ENCODE measurements at regions of chr5 and their contacts with region 1.

Region 1: DNA sequence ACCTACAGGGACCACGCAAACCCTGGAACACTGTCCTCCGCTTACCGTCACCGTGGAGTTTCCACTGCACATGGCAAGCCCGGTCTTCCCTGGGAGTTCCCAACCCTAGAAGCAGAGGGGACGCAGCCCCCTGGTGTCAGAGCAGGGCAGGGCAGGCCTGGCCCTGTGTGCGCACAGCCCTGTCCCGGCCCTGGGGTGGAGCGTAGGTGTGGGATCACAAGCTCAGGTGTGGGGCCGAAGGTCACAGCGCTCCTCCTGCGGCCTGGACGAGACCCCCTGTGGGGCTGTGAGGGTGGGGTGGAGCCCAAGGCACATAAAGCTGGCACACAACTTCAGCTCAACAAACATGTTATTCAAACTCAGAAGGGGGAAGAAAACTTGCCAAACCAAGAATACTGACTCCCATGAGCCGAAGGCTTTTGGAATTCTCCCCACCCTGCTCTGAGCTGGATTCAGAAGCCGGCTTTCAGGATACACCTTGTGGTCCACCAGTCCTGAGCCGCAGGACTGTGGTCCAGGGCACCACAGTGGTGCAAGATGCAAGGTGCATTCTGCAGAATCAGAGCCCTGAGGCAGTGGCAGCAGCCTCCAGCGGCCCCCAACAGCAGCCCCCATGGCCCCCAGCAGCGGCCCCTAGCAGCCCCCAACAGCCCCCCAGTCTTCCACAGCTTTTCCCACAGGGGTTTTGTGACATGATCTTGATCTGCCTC is 11.8 kb upstream of the EXOC3 start:
- DNase-seq: no peak
- ATAC-seq: peak; percentile 92
- H3K4me3 ChIP-seq: no peak overlapping the region
- H3K27ac ChIP-seq: no peak overlapping the region
- H3K4me1 ChIP-seq: no peaks in the 10 kb centered on the region
- H3K27me3 ChIP-seq: no peaks in the 10 kb centered on the region
- CTCF ChIP-seq: peak; percentile 85

Region 2: GRCh38 chr5:317086-317811 is 113.9 kb before region 1 on chr5:
- CTCF ChIA-PET with region 1: interaction called, 12 read pairs
- POLR2A ChIA-PET with region 1: no interaction called
- in situ Hi-C with region 1: no loop called
- intact Hi-C with region 1: loop called (anchors 5 kb)
- DNase-seq: peak; percentile 42
- ATAC-seq: peak; percentile 82
- H3K4me3 ChIP-seq: no peak overlapping the region
- H3K27ac ChIP-seq: peak overlapping the region; percentile 86
- H3K4me1 ChIP-seq: peaks cover 53% of the 10 kb centered on the region
- H3K27me3 ChIP-seq: no peaks in the 10 kb centered on the region
- CTCF ChIP-seq: peak; percentile 97

Region 3: DNA sequence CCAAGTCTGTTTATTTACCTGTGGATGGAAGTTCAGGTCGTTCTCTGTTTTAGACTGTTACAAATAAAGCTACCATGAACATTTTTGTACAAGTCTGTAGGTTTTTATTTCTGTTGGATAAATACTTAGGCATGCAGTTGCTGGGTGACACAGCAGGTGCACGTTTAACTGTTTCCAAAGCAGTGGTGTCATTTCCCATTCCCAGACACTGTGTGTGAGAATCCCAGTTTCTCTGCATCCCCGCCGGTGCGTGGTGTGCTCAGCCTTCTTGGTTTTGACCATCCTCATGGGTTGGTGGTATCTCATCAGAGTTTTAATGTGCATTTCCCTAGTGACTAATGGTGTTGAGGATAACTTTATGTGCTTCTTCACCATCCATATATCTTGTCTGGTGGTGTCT is 82.4 kb before region 1 on chr5:
- CTCF ChIA-PET with region 1: no interaction called
- POLR2A ChIA-PET with region 1: interaction called, 11 read pairs
- in situ Hi-C with region 1: no loop called
- intact Hi-C with region 1: no loop called
- DNase-seq: no peak
- ATAC-seq: no peak
- H3K4me3 ChIP-seq: no peak overlapping the region
- H3K27ac ChIP-seq: no peak overlapping the region
- H3K4me1 ChIP-seq: peaks cover 4% of the 10 kb centered on the region
- H3K27me3 ChIP-seq: no peaks in the 10 kb centered on the region
- CTCF ChIP-seq: no peak

Region 4: GRCh38 chr5:669111-669875 is 238.1 kb after region 1 on chr5:
- CTCF ChIA-PET with region 1: no interaction called
- POLR2A ChIA-PET with region 1: no interaction called
- in situ Hi-C with region 1: no loop called
- intact Hi-C with region 1: no loop called
- DNase-seq: no peak
- ATAC-seq: peak; percentile 39
- H3K4me3 ChIP-seq: peak overlapping the region in 1 of 2 experiments; percentile 13; a peak in 1 of 4 replicates
- H3K27ac ChIP-seq: peak overlapping the region; percentile 63
- H3K4me1 ChIP-seq: peaks cover 52% of the 10 kb centered on the region
- H3K27me3 ChIP-seq: no peaks in the 10 kb centered on the region
- CTCF ChIP-seq: peak; percentile 98

Region 5: DNA sequence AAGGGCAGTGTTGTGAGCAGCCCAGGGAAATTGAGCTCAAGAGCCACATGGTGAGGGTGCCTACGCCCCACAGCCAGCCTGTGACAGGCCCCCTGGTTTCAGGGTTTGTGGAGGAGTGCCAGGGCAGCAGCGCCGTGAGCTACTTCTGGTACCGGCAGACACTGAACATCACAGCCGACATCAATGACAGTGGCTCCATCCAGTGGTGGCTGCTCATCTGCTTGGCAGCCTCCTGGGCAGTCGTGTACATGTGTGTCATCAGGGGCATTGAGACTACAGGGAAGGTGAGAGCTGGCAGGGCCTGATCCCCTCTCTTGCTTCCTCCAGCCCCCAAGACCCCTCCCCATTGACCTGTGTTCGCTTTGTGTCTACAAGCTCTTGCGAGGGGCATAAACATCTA is 804.2 kb after region 1 on chr5:
- CTCF ChIA-PET with region 1: no interaction called
- POLR2A ChIA-PET with region 1: no interaction called
- in situ Hi-C with region 1: no loop called
- intact Hi-C with region 1: no loop called
- DNase-seq: no peak
- ATAC-seq: no peak
- H3K4me3 ChIP-seq: no peak overlapping the region
- H3K27ac ChIP-seq: no peak overlapping the region
- H3K4me1 ChIP-seq: no peaks in the 10 kb centered on the region
- H3K27me3 ChIP-seq: no peaks in the 10 kb centered on the region
- CTCF ChIP-seq: no peak